ENCODE measurements at regions of chr2 and their contacts with region 1.

Region 1: GRCh38 chr2:227238238-227239237 is 74.1 kb downstream of the COL4A3 start:
- DNase-seq: peak; percentile 43
- H3K4me3 ChIP-seq: no peak overlapping the region
- H3K27ac ChIP-seq: no peak overlapping the region
- H3K27me3 ChIP-seq: peaks cover 5% of the 10 kb centered on the region
- CTCF ChIP-seq: peak; percentile 98

Region 2: GRCh38 chr2:227095346-227095745 is 143.2 kb before region 1 on chr2:
- CTCF ChIA-PET with region 1: no interaction called
- POLR2A ChIA-PET with region 1: no interaction called
- DNase-seq: no peak
- H3K4me3 ChIP-seq: no peak overlapping the region
- H3K27ac ChIP-seq: no peak overlapping the region
- H3K27me3 ChIP-seq: no peaks in the 10 kb centered on the region
- CTCF ChIP-seq: no peak

Region 3: GRCh38 chr2:227132986-227133385 is 105.6 kb before region 1 on chr2:
- CTCF ChIA-PET with region 1: interaction called, 154 read pairs
- POLR2A ChIA-PET with region 1: no interaction called
- DNase-seq: no peak
- H3K4me3 ChIP-seq: no peak overlapping the region
- H3K27ac ChIP-seq: no peak overlapping the region
- H3K27me3 ChIP-seq: peaks cover 2% of the 10 kb centered on the region
- CTCF ChIP-seq: no peak

Region 4: DNA sequence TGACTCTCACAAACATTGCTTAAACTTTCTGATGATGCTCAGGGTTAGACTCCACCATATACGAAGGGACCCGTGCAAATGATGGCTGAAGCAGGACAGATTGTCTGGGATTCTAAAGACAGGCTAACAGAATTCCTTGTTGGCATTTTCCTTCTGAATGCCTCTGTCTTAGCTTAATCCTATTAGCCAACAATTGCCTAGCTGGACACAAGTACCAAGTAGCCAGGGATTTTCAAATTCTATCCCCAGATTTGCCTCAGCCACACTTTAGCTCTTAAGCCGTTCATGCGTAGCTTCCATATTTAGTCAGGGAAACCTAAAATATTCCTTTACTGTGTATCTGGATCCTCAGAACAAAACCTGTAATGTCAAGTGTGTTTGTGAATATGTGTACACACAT is 34.1 kb before region 1 on chr2:
- CTCF ChIA-PET with region 1: interaction called, 17 read pairs
- POLR2A ChIA-PET with region 1: no interaction called
- DNase-seq: no peak
- H3K4me3 ChIP-seq: no peak overlapping the region
- H3K27ac ChIP-seq: no peak overlapping the region
- H3K27me3 ChIP-seq: peaks cover 3% of the 10 kb centered on the region
- CTCF ChIP-seq: no peak

Region 5: DNA sequence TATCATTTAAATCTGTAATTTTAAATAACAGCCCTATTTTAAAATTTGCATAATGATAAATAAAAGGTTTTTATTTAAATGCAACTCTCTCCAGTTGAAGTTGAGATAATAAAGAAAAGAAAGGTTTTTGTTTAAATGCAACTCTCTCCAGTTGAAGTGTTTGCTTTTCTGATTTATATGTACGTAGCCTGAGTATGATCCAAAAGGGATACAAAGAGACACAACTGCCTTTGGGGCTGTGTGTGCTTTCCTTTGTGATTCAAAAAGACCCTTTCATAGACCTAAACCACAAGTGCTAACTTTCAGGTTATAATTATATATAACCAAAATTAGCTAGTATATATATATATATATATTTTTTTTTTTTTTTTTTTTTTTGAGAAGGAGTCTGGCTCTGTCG is 10.3 kb after region 1 on chr2:
- CTCF ChIA-PET with region 1: interaction called, 60 read pairs
- POLR2A ChIA-PET with region 1: interaction called, 4 read pairs
- DNase-seq: no peak
- H3K4me3 ChIP-seq: no peak overlapping the region
- H3K27ac ChIP-seq: no peak overlapping the region
- H3K27me3 ChIP-seq: no peaks in the 10 kb centered on the region
- CTCF ChIP-seq: no peak

Region 6: GRCh38 chr2:227296671-227297405 is 58.3 kb after region 1 on chr2:
- CTCF ChIA-PET with region 1: interaction called, 14 read pairs
- POLR2A ChIA-PET with region 1: no interaction called
- DNase-seq: no peak
- H3K4me3 ChIP-seq: no peak overlapping the region
- H3K27ac ChIP-seq: no peak overlapping the region
- H3K27me3 ChIP-seq: no peaks in the 10 kb centered on the region
- CTCF ChIP-seq: no peak

Region 7: GRCh38 chr2:227766373-227766883 is 527.9 kb after region 1 on chr2:
- CTCF ChIA-PET with region 1: interaction called, 22 read pairs
- POLR2A ChIA-PET with region 1: no interaction called
- DNase-seq: peak; percentile 50
- H3K4me3 ChIP-seq: no peak overlapping the region
- H3K27ac ChIP-seq: peak overlapping the region; percentile 21
- H3K27me3 ChIP-seq: no peaks in the 10 kb centered on the region
- CTCF ChIP-seq: peak; percentile 83